ENCODE measurements at regions of chr9 and their contacts with region 1.

Region 1: DNA sequence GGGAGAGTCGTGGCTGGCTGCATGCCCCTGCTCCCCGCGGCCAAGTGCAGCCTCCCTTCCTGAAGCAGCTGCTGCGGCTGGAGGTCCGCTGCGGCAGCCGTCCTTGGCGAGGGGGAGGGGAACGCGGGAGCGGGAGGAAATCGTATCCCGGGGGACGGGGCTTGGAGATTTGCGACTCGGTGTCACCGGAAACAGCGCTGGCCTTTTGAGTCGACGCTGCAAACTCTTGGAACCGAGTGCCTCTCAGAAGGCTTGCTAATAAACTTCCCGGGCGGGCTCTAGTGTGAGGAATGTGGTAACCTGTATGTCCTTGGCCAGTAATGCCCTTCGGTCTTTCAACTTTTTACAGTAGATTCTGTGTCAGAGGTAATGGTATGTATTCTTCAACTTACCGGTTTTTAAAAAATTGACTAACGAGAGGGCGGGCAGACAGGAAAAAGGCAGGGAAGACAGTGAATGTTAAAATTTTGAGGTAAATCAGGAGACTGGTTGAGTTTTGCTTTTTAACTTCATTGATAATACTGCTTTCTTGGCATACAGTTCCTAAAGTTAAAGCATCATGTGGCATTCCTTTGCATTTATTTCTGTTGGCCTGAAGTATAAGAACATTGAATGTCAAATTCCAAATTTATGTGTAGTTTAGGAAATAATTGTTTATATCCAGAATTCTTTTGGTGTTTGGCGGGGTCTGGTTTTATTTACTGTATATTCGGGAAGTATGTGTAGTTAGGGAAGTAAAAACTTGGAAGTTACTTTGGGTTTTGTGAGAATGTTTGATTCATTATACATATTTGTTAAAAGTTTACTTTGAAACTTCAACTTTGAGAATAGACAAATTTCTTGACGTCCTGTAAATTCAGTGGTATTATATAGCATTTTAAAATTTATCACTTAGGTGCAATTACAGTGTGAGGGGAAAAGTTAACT is 83.0 kb downstream of the PTPDC1 start:
- DNase-seq: no peak
- H3K4me3 ChIP-seq: peak overlapping the region; percentile 72
- H3K4me3 Mint-ChIP-seq: peak overlapping the region; percentile 85 to 97 (median 91)
- H3K27ac ChIP-seq: peak overlapping the region; percentile 92
- H3K27ac Mint-ChIP-seq: peak overlapping the region; percentile 87 to 97 (median 96)
- H3K4me1 ChIP-seq: peaks cover 51% of the 10 kb centered on the region
- H3K4me1 Mint-ChIP-seq: peaks cover 49 to 65% (median 61%) of the 10 kb centered on the region in 3 donors
- H3K27me3 ChIP-seq: no peaks in the 10 kb centered on the region
- H3K27me3 Mint-ChIP-seq: peaks cover 0 to 1% of the 10 kb centered on the region in 2 donors

Region 2: GRCh38 chr9:93930070-93930469 is 237.2 kb before region 1 on chr9:
- CTCF ChIA-PET with region 1: no interaction called
- POLR2A ChIA-PET with region 1: no interaction called
- DNase-seq: no peak
- H3K4me3 ChIP-seq: no peak overlapping the region
- H3K4me3 Mint-ChIP-seq: no peak overlapping the region
- H3K27ac ChIP-seq: no peak overlapping the region
- H3K27ac Mint-ChIP-seq: no peak overlapping the region
- H3K4me1 ChIP-seq: no peaks in the 10 kb centered on the region
- H3K4me1 Mint-ChIP-seq: no peaks in the 10 kb centered on the region
- H3K27me3 ChIP-seq: no peaks in the 10 kb centered on the region
- H3K27me3 Mint-ChIP-seq: peaks cover 35 to 59% of the 10 kb centered on the region in 2 donors

Region 3: GRCh38 chr9:94056442-94056974 is 110.7 kb before region 1 on chr9:
- CTCF ChIA-PET with region 1: no interaction called
- POLR2A ChIA-PET with region 1: no interaction called
- DNase-seq: no peak
- H3K4me3 ChIP-seq: no peak overlapping the region
- H3K4me3 Mint-ChIP-seq: no peak overlapping the region
- H3K27ac ChIP-seq: no peak overlapping the region
- H3K27ac Mint-ChIP-seq: no peak overlapping the region
- H3K4me1 ChIP-seq: no peaks in the 10 kb centered on the region
- H3K4me1 Mint-ChIP-seq: no peaks in the 10 kb centered on the region
- H3K27me3 ChIP-seq: no peaks in the 10 kb centered on the region
- H3K27me3 Mint-ChIP-seq: no peaks in the 10 kb centered on the region

Region 4: GRCh38 chr9:94097788-94098414 is 69.3 kb before region 1 on chr9:
- CTCF ChIA-PET with region 1: no interaction called
- POLR2A ChIA-PET with region 1: no interaction called
- DNase-seq: no peak
- H3K4me3 ChIP-seq: no peak overlapping the region
- H3K4me3 Mint-ChIP-seq: no peak overlapping the region
- H3K27ac ChIP-seq: no peak overlapping the region
- H3K27ac Mint-ChIP-seq: no peak overlapping the region
- H3K4me1 ChIP-seq: peaks cover 4% of the 10 kb centered on the region
- H3K4me1 Mint-ChIP-seq: peaks cover 0 to 2% (median 0%) of the 10 kb centered on the region in 3 donors
- H3K27me3 ChIP-seq: no peaks in the 10 kb centered on the region
- H3K27me3 Mint-ChIP-seq: no peaks in the 10 kb centered on the region

Region 5: DNA sequence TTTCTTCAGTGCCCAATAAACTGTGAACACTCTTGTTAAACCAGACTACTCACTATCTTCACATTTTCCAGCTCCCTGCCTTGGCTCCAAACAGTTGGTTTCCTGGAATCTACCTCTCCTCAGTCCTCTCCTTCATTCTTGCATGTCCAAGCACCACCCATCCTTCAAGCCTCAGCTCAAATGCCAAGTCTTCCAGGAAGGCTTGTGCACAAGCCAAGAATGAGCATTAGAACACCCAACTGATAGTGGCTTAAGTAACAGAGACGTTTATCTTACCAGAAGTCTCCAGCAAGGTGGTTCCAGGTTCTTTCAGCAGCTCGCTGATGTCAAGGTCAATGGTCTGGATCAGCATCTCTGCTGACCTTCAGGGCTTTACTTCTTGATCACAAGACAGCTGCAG is 22.8 kb before region 1 on chr9:
- CTCF ChIA-PET with region 1: no interaction called
- POLR2A ChIA-PET with region 1: interaction called, 17 read pairs
- DNase-seq: no peak
- H3K4me3 ChIP-seq: no peak overlapping the region
- H3K4me3 Mint-ChIP-seq: no peak overlapping the region
- H3K27ac ChIP-seq: no peak overlapping the region
- H3K27ac Mint-ChIP-seq: peak overlapping the region in 1 of 8 donors; percentile 66
- H3K4me1 ChIP-seq: no peaks in the 10 kb centered on the region
- H3K4me1 Mint-ChIP-seq: no peaks in the 10 kb centered on the region
- H3K27me3 ChIP-seq: no peaks in the 10 kb centered on the region
- H3K27me3 Mint-ChIP-seq: peaks cover 2 to 7% of the 10 kb centered on the region in 2 donors

Region 6: GRCh38 chr9:94277885-94278536 is 110.8 kb after region 1 on chr9:
- CTCF ChIA-PET with region 1: no interaction called
- POLR2A ChIA-PET with region 1: no interaction called
- DNase-seq: no peak
- H3K4me3 ChIP-seq: no peak overlapping the region
- H3K4me3 Mint-ChIP-seq: no peak overlapping the region
- H3K27ac ChIP-seq: peak overlapping the region; percentile 15
- H3K27ac Mint-ChIP-seq: no peak overlapping the region
- H3K4me1 ChIP-seq: no peaks in the 10 kb centered on the region
- H3K4me1 Mint-ChIP-seq: peaks cover 10 to 31% (median 17%) of the 10 kb centered on the region in 3 donors
- H3K27me3 ChIP-seq: no peaks in the 10 kb centered on the region
- H3K27me3 Mint-ChIP-seq: no peaks in the 10 kb centered on the region

Measured in CD8-positive, alpha-beta memory T cell (primary cell).